ENCODE measurements at regions of chr3 and their contacts with region 1.

Region 1: DNA sequence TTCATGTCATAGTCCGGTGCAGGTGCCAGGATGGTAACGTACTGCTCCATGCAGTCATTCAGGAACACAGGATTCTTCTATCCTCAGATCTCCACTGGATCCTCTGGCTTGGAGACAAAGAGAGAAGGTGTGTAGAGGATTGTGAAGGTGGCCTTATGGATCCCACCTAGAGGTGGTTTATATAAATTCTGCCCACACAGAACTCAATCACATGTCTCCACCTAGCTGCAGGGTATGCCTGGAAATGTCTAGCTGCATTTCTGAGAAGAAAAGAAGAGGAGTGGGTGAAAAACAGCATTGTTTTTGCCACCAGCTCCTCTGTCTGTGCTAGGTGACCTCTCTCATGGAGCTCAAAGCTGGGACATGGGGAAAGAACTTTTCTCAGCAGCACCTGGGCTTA is 478.7 kb downstream of the PDCD6IP start:
- DNase-seq: no peak

Region 2: DNA sequence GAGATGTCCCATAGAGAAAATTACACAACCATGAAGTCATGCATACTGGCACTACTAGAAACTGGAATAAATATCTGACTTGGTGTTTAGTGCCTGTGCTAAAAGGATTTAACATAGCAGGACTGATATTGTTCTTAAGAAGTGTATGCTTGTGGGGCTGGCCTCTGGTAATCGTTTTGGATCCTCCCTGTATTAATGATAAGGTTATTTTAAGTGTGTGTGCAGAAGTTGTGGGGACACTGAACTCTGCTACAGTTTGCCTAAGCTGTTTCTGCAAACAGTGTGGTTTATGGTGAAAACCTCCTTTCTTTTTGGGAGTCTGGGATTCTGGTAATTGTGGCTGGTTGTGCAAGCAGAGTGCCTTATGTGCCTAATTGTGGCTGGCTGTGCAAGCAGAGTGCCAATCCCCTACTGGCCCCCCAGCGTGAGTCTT is 679.8 kb before region 1 on chr3:
- intact Hi-C with region 1: no loop called
- DNase-seq: no peak

Region 3: DNA sequence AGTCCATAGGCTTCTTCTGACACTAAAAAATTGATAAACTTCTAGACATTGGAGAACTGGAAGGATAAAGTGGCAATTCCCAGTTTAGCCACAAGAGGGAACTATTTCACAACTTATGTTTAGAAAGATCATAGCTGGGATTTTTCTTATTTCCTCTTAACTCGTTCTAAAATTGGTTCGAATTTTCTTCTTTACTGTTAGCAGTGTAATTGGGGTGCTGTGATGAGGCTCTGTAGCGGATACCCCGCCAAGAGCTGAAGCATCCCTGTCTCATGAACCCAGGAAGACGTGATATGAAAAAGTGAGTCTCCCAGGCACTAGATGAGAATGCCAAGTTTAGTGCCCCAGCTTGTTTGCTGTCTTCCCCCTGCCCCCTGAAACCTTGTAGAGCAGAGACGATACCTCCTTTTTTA is 393.6 kb before region 1 on chr3:
- intact Hi-C with region 1: loop called (anchors 10 kb)
- DNase-seq: no peak

Measured in cardiac septum (tissue), 1 donor.